Endothelial cell of umbilical vein (primary cell): ENCODE measurements at regions of chr15 and their contacts with region 1.

Region 1: DNA sequence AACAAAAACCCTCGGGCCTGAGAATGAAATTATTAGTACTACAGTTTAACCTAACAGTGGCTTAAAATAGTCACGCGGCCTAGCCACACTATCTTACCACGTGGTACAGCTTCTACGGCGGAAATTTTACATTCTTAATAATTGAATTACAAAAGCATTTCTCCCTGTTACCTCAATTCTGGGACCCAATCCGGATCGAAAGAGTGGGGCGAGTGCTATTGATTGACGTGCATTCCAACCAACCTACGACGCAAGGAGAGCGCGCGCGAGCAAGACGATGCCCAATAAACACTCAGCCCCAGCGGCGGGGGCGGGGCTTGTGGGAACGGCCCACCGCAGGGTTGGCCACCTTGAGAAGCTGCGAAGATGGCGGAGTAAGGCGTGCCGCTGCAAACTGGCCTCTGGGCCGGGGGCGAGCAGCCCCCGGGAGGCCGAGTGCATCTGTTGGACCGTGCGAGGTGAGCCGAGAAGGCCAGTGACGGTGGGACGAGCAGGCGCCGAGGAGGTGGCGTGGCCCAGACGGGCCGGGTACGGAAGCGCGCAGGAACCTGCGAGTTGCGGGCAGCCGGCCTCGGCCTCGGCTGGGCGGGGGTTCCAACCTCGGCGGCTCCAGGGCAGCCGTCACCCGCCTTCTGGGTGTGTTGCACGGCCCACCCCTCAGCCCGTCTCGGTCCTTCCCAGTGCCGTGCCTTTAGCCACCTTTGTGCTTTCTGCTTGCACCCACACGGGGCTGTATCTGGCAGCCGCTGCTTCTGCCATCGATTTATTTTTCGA is 48.6 kb downstream of the OIP5 start:
- DNase-seq: peak; percentile 100
- H3K4me3 ChIP-seq: peak overlapping the region; percentile 83 to 96 (median 95)
- H3K27ac ChIP-seq: peak overlapping the region; percentile 62
- H3K4me1 ChIP-seq: peaks cover 6% of the 10 kb centered on the region
- H3K27me3 ChIP-seq: no peaks in the 10 kb centered on the region
- CTCF ChIP-seq: no peak
- POLR2A ChIP-seq: peak; percentile 97

Region 2: GRCh38 chr15:41331833-41332787 is 48.3 kb after region 1 on chr15 and contains the start of gene OIP5:
- CTCF ChIA-PET with region 1: interaction called, 7 read pairs
- POLR2A ChIA-PET with region 1: no interaction called
- dilution Hi-C with region 1: no loop called
- intact Hi-C with region 1: loop called (anchors 2 kb)
- DNase-seq: peak; percentile 100
- H3K4me3 ChIP-seq: peak within 1 kb of the TSS; percentile 63 to 94 (median 93)
- H3K27ac ChIP-seq: peak within 1 kb of the TSS; percentile 73
- H3K4me1 ChIP-seq: peaks cover 24% of the 10 kb centered on the region
- H3K27me3 ChIP-seq: no peaks in the 10 kb centered on the region
- CTCF ChIP-seq: peak; percentile 55 to 72
- POLR2A ChIP-seq: peak; percentile 88
- total RNA-seq, gene OIP5: 9.2 and 11.4 TPM in 2 replicates